ENCODE measurements at regions of chrX and their contacts with region 1.

Region 1: GRCh38 chrX:39418731-39419638 is 617.7 kb downstream of the MID1IP1 start:
- DNase-seq: peak; percentile 71 to 92 (median 84)
- H3K4me3 ChIP-seq: no peak overlapping the region
- H3K27ac ChIP-seq: peak overlapping the region; percentile 9 to 86 (median 61)
- H3K4me1 ChIP-seq: peaks cover 4 to 5% of the 10 kb centered on the region in 2 donors
- H3K27me3 ChIP-seq: no peaks in the 10 kb centered on the region
- CTCF ChIP-seq: no peak
- POLR2A ChIP-seq: no peak

Region 2: DNA sequence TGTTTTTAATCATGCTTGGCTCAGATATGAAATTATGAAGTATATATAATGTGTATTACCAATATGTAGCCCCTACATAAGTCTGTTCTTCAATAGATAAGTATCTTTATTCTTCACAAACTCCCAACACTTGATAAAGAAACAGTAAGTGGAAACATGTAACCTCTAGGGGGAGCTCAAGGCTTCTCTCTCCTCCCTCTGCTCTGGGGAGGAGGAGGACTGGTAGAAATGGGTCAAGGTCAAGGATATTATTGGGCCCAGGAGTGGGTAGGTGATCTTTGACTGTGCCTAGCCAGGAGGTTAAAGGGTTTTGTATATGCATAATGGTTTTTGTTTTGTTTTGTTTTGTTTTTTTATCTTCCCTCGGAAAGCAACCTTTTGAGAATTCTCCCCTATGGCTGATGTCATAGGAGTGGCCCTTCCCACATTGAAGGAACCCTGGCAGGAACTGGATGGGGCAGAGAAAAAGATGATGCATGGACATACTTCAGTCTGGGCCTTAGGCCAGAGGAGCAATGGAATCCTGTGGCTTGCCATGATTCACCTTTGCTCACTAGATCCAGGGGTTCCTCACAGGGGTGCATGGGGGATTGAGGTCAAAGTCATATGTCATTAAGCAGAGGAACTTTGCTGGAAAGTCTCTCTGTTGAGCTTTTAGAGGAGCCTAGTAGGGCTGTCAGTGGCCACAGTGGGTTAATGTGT is 157.4 kb before region 1 on chrX:
- intact Hi-C with region 1: loop called in 1 of 2 experiments (anchors 10 kb)
- DNase-seq: peak in 5 of 7 donors; percentile 19 to 44 (median 25)
- H3K4me3 ChIP-seq: no peak overlapping the region
- H3K27ac ChIP-seq: no peak overlapping the region
- H3K4me1 ChIP-seq: no peaks in the 10 kb centered on the region
- H3K27me3 ChIP-seq: peaks cover 8% of the 10 kb centered on the region
- CTCF ChIP-seq: peak; percentile 33 to 62 (median 48)
- POLR2A ChIP-seq: no peak

Region 3: GRCh38 chrX:39338583-39338982 is 80.4 kb before region 1 on chrX:
- intact Hi-C with region 1: no loop called
- DNase-seq: no peak
- H3K4me3 ChIP-seq: no peak overlapping the region
- H3K27ac ChIP-seq: no peak overlapping the region
- H3K4me1 ChIP-seq: no peaks in the 10 kb centered on the region
- H3K27me3 ChIP-seq: peaks cover 5% of the 10 kb centered on the region
- CTCF ChIP-seq: no peak
- POLR2A ChIP-seq: no peak

Region 4: GRCh38 chrX:39652336-39653131 is 233.5 kb after region 1 on chrX:
- intact Hi-C with region 1: no loop called
- DNase-seq: peak in 5 of 7 donors; percentile 15 to 54 (median 19)
- H3K4me3 ChIP-seq: no peak overlapping the region
- H3K27ac ChIP-seq: no peak overlapping the region
- H3K4me1 ChIP-seq: no peaks in the 10 kb centered on the region
- H3K27me3 ChIP-seq: peaks cover 31% of the 10 kb centered on the region
- CTCF ChIP-seq: peak in 5 of 6 experiments; percentile 18 to 51 (median 32)
- POLR2A ChIP-seq: no peak

Measured in adrenal gland (tissue), 19 donors.